Panc1 (cell line): ENCODE measurements at regions of chr2 and their contacts with region 1.

Region 1: GRCh38 chr2:134118279-134119116 is 135.4 kb upstream of the MGAT5 start:
- DNase-seq: peak; percentile 69
- ATAC-seq: peak; percentile 65
- H3K4me3 ChIP-seq: no peak overlapping the region
- H3K27ac ChIP-seq: peak overlapping the region; percentile 29; the same call in 1 of the 2 replicates
- H3K4me1 ChIP-seq: peaks cover 10% of the 10 kb centered on the region
- H3K27me3 ChIP-seq: peaks cover 16% of the 10 kb centered on the region
- CTCF ChIP-seq: peak; percentile 78

Region 2: GRCh38 chr2:133886735-133887660 is 231.5 kb before region 1 on chr2:
- CTCF ChIA-PET with region 1: interaction called, 3 read pairs
- POLR2A ChIA-PET with region 1: no interaction called
- in situ Hi-C with region 1: no loop called
- intact Hi-C with region 1: loop called (anchors 2 kb)
- DNase-seq: peak; percentile 20
- ATAC-seq: peak; percentile 93
- H3K4me3 ChIP-seq: no peak overlapping the region
- H3K27ac ChIP-seq: no peak overlapping the region
- H3K4me1 ChIP-seq: no peaks in the 10 kb centered on the region
- H3K27me3 ChIP-seq: no peaks in the 10 kb centered on the region; the same call in 1 of the 2 replicates
- CTCF ChIP-seq: peak; percentile 79

Region 3: GRCh38 chr2:134035605-134036370 is 82.7 kb before region 1 on chr2:
- CTCF ChIA-PET with region 1: no interaction called
- POLR2A ChIA-PET with region 1: no interaction called
- in situ Hi-C with region 1: no loop called
- intact Hi-C with region 1: no loop called
- DNase-seq: no peak
- ATAC-seq: no peak
- H3K4me3 ChIP-seq: no peak overlapping the region
- H3K27ac ChIP-seq: no peak overlapping the region
- H3K4me1 ChIP-seq: no peaks in the 10 kb centered on the region
- H3K27me3 ChIP-seq: no peaks in the 10 kb centered on the region
- CTCF ChIP-seq: no peak

Region 4: DNA sequence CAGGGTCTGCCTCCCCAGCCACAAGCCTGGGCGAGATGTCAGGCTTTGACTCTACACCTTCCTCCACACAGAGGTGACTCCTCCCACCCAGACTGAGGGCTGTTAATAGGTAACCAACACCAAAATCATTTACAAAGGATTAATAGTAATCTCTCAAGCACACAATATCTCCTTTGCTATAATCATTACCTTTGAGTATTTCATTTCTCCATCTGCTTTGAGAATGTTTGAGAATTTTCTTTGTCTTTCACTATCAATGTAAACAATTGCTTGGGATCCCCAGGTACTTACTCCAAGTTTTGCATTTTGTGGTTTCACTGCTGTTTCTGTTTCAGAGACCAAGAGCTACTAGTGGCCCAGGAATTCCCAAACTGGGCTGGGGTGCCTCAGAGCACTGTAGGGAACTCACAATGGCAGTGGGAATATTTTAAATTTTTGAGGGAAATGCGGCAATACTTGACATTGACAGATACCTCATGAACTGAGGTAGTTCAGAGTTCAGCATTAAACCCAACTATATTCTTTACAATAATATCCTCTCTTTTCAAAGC is 31.1 kb before region 1 on chr2:
- CTCF ChIA-PET with region 1: no interaction called
- POLR2A ChIA-PET with region 1: no interaction called
- in situ Hi-C with region 1: no loop called
- intact Hi-C with region 1: no loop called
- DNase-seq: no peak
- ATAC-seq: no peak
- H3K4me3 ChIP-seq: no peak overlapping the region
- H3K27ac ChIP-seq: no peak overlapping the region
- H3K4me1 ChIP-seq: no peaks in the 10 kb centered on the region
- H3K27me3 ChIP-seq: no peaks in the 10 kb centered on the region
- CTCF ChIP-seq: no peak

Region 5: DNA sequence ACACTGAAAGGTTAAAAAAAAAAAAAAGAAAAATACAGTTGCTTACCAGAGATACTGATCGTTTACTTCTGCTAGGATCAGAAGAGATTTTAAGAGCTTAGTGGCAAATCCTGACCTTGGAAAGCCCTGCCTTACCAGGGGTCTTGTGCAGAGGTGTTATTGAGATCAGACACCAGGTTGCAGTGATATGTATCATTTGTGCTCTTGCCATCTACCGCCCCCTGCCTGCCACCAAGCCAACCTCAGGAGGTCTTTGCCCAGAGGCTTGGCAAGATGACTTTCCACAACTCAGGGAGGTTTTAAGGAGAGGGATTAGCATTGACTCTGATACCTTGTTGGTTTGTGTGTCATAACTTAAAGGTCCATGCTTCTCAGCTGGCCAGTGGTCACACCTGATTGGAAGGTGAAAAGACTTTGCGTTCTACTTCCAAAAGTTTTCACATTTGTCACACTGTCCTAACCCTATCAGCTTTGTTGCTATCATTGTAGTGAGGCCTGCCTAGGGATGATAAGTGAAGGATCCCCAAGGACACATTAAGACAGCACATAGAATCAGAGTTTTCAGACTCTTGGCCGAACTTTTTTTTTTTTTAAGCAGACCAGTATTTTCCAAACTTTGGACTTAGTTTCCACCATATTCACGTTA is 89.2 kb after region 1 on chr2:
- CTCF ChIA-PET with region 1: interaction called, 3 read pairs
- POLR2A ChIA-PET with region 1: no interaction called
- in situ Hi-C with region 1: no loop called
- intact Hi-C with region 1: loop called (anchors 5 kb)
- DNase-seq: peak; percentile 33
- ATAC-seq: peak; percentile 85
- H3K4me3 ChIP-seq: no peak overlapping the region
- H3K27ac ChIP-seq: no peak overlapping the region
- H3K4me1 ChIP-seq: no peaks in the 10 kb centered on the region
- H3K27me3 ChIP-seq: no peaks in the 10 kb centered on the region
- CTCF ChIP-seq: peak; percentile 84

Region 6: GRCh38 chr2:134245340-134245984 is 127.0 kb after region 1 on chr2:
- CTCF ChIA-PET with region 1: interaction called, 7 read pairs
- POLR2A ChIA-PET with region 1: no interaction called
- in situ Hi-C with region 1: no loop called
- intact Hi-C with region 1: loop called (anchors 1 kb)
- DNase-seq: peak; percentile 36
- ATAC-seq: peak; percentile 71
- H3K4me3 ChIP-seq: no peak overlapping the region
- H3K27ac ChIP-seq: no peak overlapping the region
- H3K4me1 ChIP-seq: no peaks in the 10 kb centered on the region
- H3K27me3 ChIP-seq: no peaks in the 10 kb centered on the region
- CTCF ChIP-seq: peak; percentile 91

Region 7: GRCh38 chr2:134411828-134412638 is 293.5 kb after region 1 on chr2:
- CTCF ChIA-PET with region 1: interaction called, 25 read pairs
- POLR2A ChIA-PET with region 1: no interaction called
- in situ Hi-C with region 1: no loop called
- intact Hi-C with region 1: loop called (anchors 2 kb)
- DNase-seq: peak; percentile 41
- ATAC-seq: peak; percentile 90
- H3K4me3 ChIP-seq: no peak overlapping the region
- H3K27ac ChIP-seq: no peak overlapping the region
- H3K4me1 ChIP-seq: no peaks in the 10 kb centered on the region
- H3K27me3 ChIP-seq: no peaks in the 10 kb centered on the region
- CTCF ChIP-seq: peak; percentile 74

Region 8: GRCh38 chr2:134452042-134452733 is 333.7 kb after region 1 on chr2:
- CTCF ChIA-PET with region 1: interaction called, 10 read pairs
- POLR2A ChIA-PET with region 1: no interaction called
- in situ Hi-C with region 1: no loop called
- intact Hi-C with region 1: loop called (anchors 1 kb)
- DNase-seq: no peak
- ATAC-seq: no peak
- H3K4me3 ChIP-seq: no peak overlapping the region
- H3K27ac ChIP-seq: no peak overlapping the region
- H3K4me1 ChIP-seq: no peaks in the 10 kb centered on the region
- H3K27me3 ChIP-seq: no peaks in the 10 kb centered on the region
- CTCF ChIP-seq: no peak